Activated B cell treated with CpG ODN at 0.5 μM for 24 hours (primary cell): ENCODE measurements at regions of chr2 and their contacts with region 1.

Region 1: DNA sequence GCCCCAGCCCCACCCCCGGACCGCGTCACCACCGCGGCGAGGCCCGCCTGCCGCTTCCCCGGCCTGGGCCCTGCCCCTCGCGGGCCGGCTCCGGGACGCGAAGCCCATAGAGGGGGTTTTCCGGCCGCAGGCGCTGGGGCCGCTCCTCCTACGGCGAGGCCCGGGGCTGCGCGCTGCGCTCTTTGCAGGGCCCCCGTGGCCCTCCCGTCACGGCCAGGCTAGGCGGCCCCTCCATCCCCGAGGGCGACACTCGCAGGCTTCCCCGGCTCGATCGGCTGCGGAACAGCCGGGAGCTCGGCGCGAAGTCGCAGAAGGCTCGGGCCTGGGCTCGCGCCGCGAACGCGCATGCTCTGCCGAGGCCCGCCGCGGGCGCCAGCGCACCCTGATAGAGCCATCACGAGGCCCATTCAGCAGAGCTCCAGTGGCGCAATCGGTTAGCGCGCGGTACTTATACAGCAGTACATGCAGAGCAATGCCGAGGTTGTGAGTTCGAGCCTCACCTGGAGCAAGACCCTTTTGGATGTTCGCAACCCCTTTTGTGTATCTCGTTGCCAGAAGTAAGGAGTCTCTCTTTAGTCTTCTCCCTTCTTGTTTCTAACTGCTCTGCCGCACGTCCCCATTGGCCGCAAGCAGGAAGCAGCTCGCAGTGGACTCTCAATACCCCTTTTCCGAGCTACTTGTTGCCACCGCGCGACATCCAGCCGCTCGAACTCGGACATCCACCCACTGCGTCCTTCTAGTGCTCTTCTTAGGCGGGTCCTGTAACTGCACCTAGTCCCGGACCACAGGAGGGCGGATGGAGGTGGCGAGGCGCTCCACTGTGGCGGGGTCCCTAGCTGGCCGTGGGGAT is 18.0 kb upstream of the HAAO start:
- DNase-seq: peak; percentile 96
- ATAC-seq: peak; percentile 79
- H3K4me3 Mint-ChIP-seq: peak overlapping the region; percentile 94
- H3K27ac Mint-ChIP-seq: peak overlapping the region; percentile 99
- H3K4me1 Mint-ChIP-seq: peaks cover 26% of the 10 kb centered on the region
- H3K27me3 Mint-ChIP-seq: no peaks in the 10 kb centered on the region
- CTCF ChIP-seq: no peak

Region 2: DNA sequence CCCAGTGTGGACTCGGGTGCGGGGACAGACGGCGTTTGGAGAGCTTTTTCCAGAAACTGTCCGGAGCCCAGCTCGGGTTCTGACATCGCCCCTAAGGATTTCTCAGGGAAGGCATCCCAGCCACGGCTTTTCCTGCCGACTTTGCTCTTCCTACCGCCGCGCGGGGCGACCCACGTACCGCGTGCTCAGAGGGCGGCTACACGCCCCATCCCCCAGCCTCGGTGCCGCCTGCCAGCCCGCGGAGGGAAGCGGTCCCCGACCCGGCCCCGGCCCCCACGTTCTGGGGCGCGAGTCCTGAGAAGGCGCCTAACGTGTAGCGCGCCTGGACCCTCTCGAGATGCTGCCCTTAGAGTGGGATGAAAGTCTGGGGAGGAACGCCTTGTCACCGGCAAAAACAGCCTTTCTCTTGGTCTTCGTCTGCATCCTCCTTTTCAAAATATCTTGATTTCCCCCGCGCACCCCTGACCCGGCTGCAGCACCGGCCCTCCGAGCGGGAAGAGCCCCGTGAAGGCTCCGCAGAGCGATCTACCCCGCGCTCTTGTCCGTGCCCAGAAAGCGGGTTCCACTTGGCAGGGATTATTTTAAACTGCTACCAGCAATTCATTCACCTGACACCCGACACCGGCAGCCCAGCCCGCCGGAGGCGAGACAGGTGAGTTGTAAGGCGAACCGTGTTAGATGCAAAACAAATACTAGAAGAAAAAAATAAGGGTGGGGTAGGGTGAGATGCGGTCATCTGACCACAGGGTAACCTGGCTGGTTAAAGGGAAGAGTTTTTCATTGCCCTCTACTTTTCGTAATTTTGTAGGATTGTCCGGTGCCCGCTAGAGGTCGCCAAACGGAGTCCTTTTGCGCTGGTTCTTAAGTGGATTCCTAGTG is 315.8 kb before region 1 on chr2:
- CTCF ChIA-PET with region 1: no interaction called
- POLR2A ChIA-PET with region 1: interaction called, 3 read pairs
- intact Hi-C with region 1: loop called (anchors 1 kb)
- DNase-seq: peak; percentile 47
- ATAC-seq: peak; percentile 66
- H3K4me3 Mint-ChIP-seq: peak overlapping the region; percentile 92
- H3K27ac Mint-ChIP-seq: peak overlapping the region; percentile 59
- H3K4me1 Mint-ChIP-seq: peaks cover 8% of the 10 kb centered on the region
- H3K27me3 Mint-ChIP-seq: peaks cover 22% of the 10 kb centered on the region
- CTCF ChIP-seq: no peak

Region 3: GRCh38 chr2:42754021-42754775 is 56.1 kb before region 1 on chr2:
- CTCF ChIA-PET with region 1: no interaction called
- POLR2A ChIA-PET with region 1: interaction called, 41 read pairs
- intact Hi-C with region 1: loop called (anchors 2 kb)
- DNase-seq: peak; percentile 49
- ATAC-seq: peak; percentile 72
- H3K4me3 Mint-ChIP-seq: peak overlapping the region; percentile 39
- H3K27ac Mint-ChIP-seq: peak overlapping the region; percentile 75
- H3K4me1 Mint-ChIP-seq: peaks cover 47% of the 10 kb centered on the region
- H3K27me3 Mint-ChIP-seq: no peaks in the 10 kb centered on the region
- CTCF ChIP-seq: no peak

Region 4: GRCh38 chr2:42828487-42829425 is 18.4 kb after region 1 on chr2:
- CTCF ChIA-PET with region 1: interaction called, 18 read pairs
- POLR2A ChIA-PET with region 1: interaction called, 5 read pairs
- intact Hi-C with region 1: loop called (anchors 1 kb)
- DNase-seq: peak; percentile 52
- ATAC-seq: peak; percentile 88
- H3K4me3 Mint-ChIP-seq: no peak overlapping the region
- H3K27ac Mint-ChIP-seq: no peak overlapping the region
- H3K4me1 Mint-ChIP-seq: peaks cover 14% of the 10 kb centered on the region
- H3K27me3 Mint-ChIP-seq: no peaks in the 10 kb centered on the region
- CTCF ChIP-seq: peak; percentile 65

Region 5: DNA sequence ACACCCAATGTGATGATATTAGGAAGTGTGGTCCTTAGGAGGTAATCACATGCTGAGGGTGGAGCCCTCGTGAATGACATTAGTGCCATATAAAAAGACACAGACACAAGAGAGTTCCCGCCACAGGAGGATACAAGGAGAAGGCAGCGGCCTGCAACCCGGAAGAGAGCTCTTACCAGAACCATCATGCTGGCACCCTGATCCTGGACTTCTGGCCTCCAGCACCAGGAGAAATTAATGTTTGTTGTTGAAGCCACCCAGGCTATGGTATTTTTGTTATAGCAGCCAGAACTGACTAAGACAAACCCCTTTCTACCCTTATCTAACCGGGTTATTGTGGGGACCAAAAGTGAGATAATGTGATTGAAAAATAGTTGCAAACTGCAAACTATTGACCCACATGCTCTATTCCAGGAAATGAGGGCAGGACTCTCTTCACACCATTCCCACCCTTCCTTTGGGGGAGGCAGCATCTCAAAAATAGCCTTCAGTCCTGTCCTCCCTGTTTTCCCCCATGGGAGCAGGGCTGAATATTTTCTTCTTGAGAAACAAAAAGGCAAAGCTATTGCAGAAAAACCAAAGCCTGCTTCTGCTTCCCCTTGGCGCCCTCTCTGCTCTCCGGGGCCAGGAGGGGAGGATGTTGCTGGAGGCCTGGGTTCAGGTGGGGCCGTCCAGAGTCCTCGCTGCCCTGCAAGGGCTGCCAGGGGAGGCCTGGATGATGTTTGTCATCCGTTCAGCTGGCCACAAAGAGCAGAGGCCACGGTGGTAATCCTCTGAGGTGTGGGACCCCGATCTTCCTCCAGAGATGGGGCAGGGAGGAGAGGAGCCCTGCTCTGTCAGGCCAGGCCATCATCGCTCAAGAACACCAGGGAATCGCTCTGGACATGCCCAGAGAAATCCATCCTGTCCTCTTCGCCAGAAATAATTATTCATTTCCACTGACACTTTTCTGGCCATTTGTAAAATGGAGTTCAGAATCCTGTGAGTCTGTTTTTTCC is 55.8 kb after region 1 on chr2:
- CTCF ChIA-PET with region 1: no interaction called
- POLR2A ChIA-PET with region 1: no interaction called
- intact Hi-C with region 1: no loop called
- DNase-seq: no peak
- ATAC-seq: no peak
- H3K4me3 Mint-ChIP-seq: no peak overlapping the region
- H3K27ac Mint-ChIP-seq: no peak overlapping the region
- H3K4me1 Mint-ChIP-seq: no peaks in the 10 kb centered on the region
- H3K27me3 Mint-ChIP-seq: no peaks in the 10 kb centered on the region
- CTCF ChIP-seq: no peak

Region 6: DNA sequence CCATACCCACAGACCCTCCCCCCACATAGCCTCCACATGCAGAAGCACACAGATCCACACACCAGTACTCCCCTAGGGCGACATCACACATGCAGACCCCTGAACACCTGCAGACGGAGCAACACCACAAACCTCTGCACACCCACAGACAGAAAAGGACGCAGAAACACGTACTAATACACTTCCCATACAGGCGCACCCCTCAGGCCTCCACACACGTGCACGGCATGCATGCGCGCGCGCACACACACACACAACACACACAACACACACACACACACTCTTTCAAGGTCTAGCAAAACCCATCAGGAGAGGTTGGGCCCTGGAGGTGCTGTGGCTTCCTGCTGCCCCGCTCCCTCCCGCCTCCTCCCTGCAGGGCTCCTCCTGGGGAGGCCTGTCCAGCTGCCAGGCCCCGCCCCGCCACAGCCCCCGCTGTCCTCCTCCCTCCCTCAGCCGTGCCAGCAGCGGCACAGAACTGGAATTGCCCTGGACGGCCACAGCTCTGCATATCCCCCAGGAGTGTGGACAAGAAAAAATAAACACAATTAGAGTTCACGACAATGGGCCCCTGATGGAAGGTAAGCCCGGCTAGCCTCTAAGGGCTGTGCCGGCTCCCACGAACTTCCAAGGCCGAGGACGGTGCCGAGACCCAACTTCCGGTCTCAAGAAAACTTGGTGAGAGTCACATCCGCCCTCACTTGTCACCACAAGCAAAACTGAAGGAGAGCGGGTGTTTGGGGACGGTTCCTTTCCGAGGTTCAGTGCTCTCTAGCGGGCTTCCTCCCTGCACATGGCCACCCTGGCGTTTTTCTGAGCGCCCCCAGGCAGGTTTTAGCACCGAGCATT is 409.3 kb after region 1 on chr2:
- CTCF ChIA-PET with region 1: no interaction called
- POLR2A ChIA-PET with region 1: interaction called, 11 read pairs
- intact Hi-C with region 1: no loop called
- DNase-seq: peak; percentile 58
- ATAC-seq: peak; percentile 54
- H3K4me3 Mint-ChIP-seq: peak overlapping the region; percentile 92
- H3K27ac Mint-ChIP-seq: peak overlapping the region; percentile 99
- H3K4me1 Mint-ChIP-seq: peaks cover 71% of the 10 kb centered on the region
- H3K27me3 Mint-ChIP-seq: peaks cover 2% of the 10 kb centered on the region
- CTCF ChIP-seq: no peak